CD4-positive, alpha-beta T cell (primary cell): ENCODE measurements at regions of chr19 and their contacts with region 1.

Region 1: GRCh38 chr19:3057306-3057714 is 5.0 kb downstream of the TLE5 start:
- DNase-seq: no peak
- ATAC-seq: no peak
- H3K4me3 ChIP-seq: no peak overlapping the region
- H3K4me3 Mint-ChIP-seq: peak overlapping the region; percentile 42
- H3K27ac ChIP-seq: peak overlapping the region in 1 of 2 donors; percentile 38
- H3K27ac Mint-ChIP-seq: peak overlapping the region; percentile 96
- H3K4me1 ChIP-seq: peaks cover 84% of the 10 kb centered on the region
- H3K4me1 Mint-ChIP-seq: peaks cover 61% of the 10 kb centered on the region
- H3K27me3 ChIP-seq: no peaks in the 10 kb centered on the region
- H3K27me3 Mint-ChIP-seq: no peaks in the 10 kb centered on the region
- CTCF ChIP-seq: no peak

Region 2: DNA sequence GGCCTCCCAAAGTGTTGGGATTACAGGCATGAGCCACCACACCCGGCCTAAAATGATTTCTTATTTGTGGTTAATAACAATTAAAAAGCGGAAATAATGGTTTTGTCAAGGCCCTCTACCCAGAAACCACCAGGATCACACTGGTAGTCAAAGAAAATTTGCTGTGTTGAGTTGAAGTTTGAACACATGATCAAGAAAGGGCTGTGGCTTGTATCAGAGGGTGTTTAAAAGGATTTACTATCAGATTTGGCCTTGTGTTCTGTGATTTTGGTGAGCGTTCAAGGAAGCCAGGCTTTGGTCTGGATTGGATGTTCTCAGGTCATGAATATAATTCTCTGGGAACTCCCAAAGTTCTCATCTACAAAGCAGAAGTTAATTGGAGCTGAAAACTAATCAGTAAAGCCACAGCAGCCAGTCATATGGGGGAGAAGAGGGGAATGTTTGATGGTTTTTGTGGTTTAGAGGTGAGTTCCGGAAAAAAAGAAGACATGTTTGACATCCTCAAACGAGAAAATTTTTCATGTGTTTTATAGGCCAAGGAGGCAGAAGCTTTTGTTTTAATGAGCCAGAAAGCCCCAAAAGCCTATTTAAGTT is 200.8 kb before region 1 on chr19:
- CTCF ChIA-PET with region 1: no interaction called
- POLR2A ChIA-PET with region 1: no interaction called
- intact Hi-C with region 1: no loop called
- DNase-seq: peak in 4 of 14 experiments; percentile 13 to 82 (median 74)
- ATAC-seq: peak; percentile 88
- H3K4me3 ChIP-seq: no peak overlapping the region
- H3K4me3 Mint-ChIP-seq: peak overlapping the region; percentile 61
- H3K27ac ChIP-seq: peak overlapping the region in 1 of 2 donors; percentile 23
- H3K27ac Mint-ChIP-seq: peak overlapping the region; percentile 57
- H3K4me1 ChIP-seq: peaks cover 35% of the 10 kb centered on the region
- H3K4me1 Mint-ChIP-seq: peaks cover 32% of the 10 kb centered on the region
- H3K27me3 ChIP-seq: no peaks in the 10 kb centered on the region
- H3K27me3 Mint-ChIP-seq: no peaks in the 10 kb centered on the region
- CTCF ChIP-seq: no peak

Region 3: GRCh38 chr19:3041761-3042620 is 15.3 kb before region 1 on chr19:
- CTCF ChIA-PET with region 1: interaction called, 3 read pairs
- POLR2A ChIA-PET with region 1: interaction called, 225 read pairs
- intact Hi-C with region 1: loop called in 1 of 2 experiments (anchors 2 kb)
- DNase-seq: no peak
- ATAC-seq: peak; percentile 21
- H3K4me3 ChIP-seq: no peak overlapping the region
- H3K4me3 Mint-ChIP-seq: peak overlapping the region; percentile 62
- H3K27ac ChIP-seq: no peak overlapping the region
- H3K27ac Mint-ChIP-seq: peak overlapping the region; percentile 43
- H3K4me1 ChIP-seq: peaks cover 20% of the 10 kb centered on the region
- H3K4me1 Mint-ChIP-seq: peaks cover 38% of the 10 kb centered on the region
- H3K27me3 ChIP-seq: no peaks in the 10 kb centered on the region
- H3K27me3 Mint-ChIP-seq: no peaks in the 10 kb centered on the region
- CTCF ChIP-seq: no peak

Region 4: GRCh38 chr19:3185482-3186376 is 128.4 kb after region 1 on chr19 and contains the start of gene NCLN:
- CTCF ChIA-PET with region 1: no interaction called
- POLR2A ChIA-PET with region 1: interaction called, 19 read pairs
- intact Hi-C with region 1: loop called in 1 of 2 experiments (anchors 5 kb)
- DNase-seq: peak; percentile 88 to 96 (median 94)
- ATAC-seq: peak; percentile 82
- H3K4me3 ChIP-seq: peak within 1 kb of the TSS; percentile 59
- H3K4me3 Mint-ChIP-seq: peak within 1 kb of the TSS; percentile 93
- H3K27ac ChIP-seq: peak within 1 kb of the TSS; percentile 62
- H3K27ac Mint-ChIP-seq: peak within 1 kb of the TSS; percentile 86
- H3K4me1 ChIP-seq: peaks cover 92% of the 10 kb centered on the region
- H3K4me1 Mint-ChIP-seq: peaks cover 57% of the 10 kb centered on the region
- H3K27me3 ChIP-seq: no peaks in the 10 kb centered on the region
- H3K27me3 Mint-ChIP-seq: no peaks in the 10 kb centered on the region
- CTCF ChIP-seq: no peak
- total RNA-seq, gene NCLN: 49.6 to 51.9 TPM